ENCODE measurements at regions of chr1 and their contacts with region 1.

Region 1: GRCh38 chr1:25099343-25099951 is 132.9 kb downstream of the SYF2 start:
- DNase-seq: no peak
- H3K4me3 Mint-ChIP-seq: no peak overlapping the region
- H3K27ac Mint-ChIP-seq: no peak overlapping the region
- H3K4me1 Mint-ChIP-seq: no peaks in the 10 kb centered on the region
- H3K27me3 Mint-ChIP-seq: peaks cover 36% of the 10 kb centered on the region
- CTCF ChIP-seq: no peak

Region 2: GRCh38 chr1:24932284-24932683 is 167.2 kb before region 1 on chr1:
- CTCF ChIA-PET with region 1: interaction called, 9 read pairs
- POLR2A ChIA-PET with region 1: interaction called, 3 read pairs
- intact Hi-C with region 1: loop called (anchors 1 kb)
- DNase-seq: peak; percentile 23
- H3K4me3 Mint-ChIP-seq: no peak overlapping the region
- H3K27ac Mint-ChIP-seq: no peak overlapping the region
- H3K4me1 Mint-ChIP-seq: no peaks in the 10 kb centered on the region
- H3K27me3 Mint-ChIP-seq: peaks cover 15% of the 10 kb centered on the region
- CTCF ChIP-seq: peak; percentile 76

Region 3: GRCh38 chr1:25182629-25183028 is 83.2 kb after region 1 on chr1:
- CTCF ChIA-PET with region 1: no interaction called
- POLR2A ChIA-PET with region 1: no interaction called
- intact Hi-C with region 1: no loop called
- DNase-seq: peak; percentile 16
- H3K4me3 Mint-ChIP-seq: no peak overlapping the region
- H3K27ac Mint-ChIP-seq: no peak overlapping the region
- H3K4me1 Mint-ChIP-seq: no peaks in the 10 kb centered on the region
- H3K27me3 Mint-ChIP-seq: peaks cover 12% of the 10 kb centered on the region
- CTCF ChIP-seq: no peak

Measured in MCF 10A (cell line).